Activated B cell treated with CpG ODN at 0.5 μM for 24 hours (primary cell): ENCODE measurements at regions of chr15 and their contacts with region 1.

Region 1: GRCh38 chr15:80989518-80990478 is at the start of gene MESD:
- DNase-seq: peak; percentile 90
- ATAC-seq: peak; percentile 99
- H3K4me3 Mint-ChIP-seq: peak within 1 kb of the TSS; percentile 99
- H3K27ac Mint-ChIP-seq: peak within 1 kb of the TSS; percentile 99
- H3K4me1 Mint-ChIP-seq: peaks cover 54% of the 10 kb centered on the region
- H3K27me3 Mint-ChIP-seq: no peaks in the 10 kb centered on the region
- CTCF ChIP-seq: no peak
- total RNA-seq, gene MESD: 21.4 and 23.8 TPM in 2 replicates

Region 2: GRCh38 chr15:80695104-80695910 is 294.5 kb before region 1 on chr15 and contains the start of gene ABHD17C:
- CTCF ChIA-PET with region 1: no interaction called
- POLR2A ChIA-PET with region 1: no interaction called
- intact Hi-C with region 1: loop called (anchors 10 kb)
- DNase-seq: peak; percentile 58
- ATAC-seq: peak; percentile 82
- H3K4me3 Mint-ChIP-seq: peak within 1 kb of the TSS; percentile 87
- H3K27ac Mint-ChIP-seq: peak within 1 kb of the TSS; percentile 69
- H3K4me1 Mint-ChIP-seq: peaks cover 16% of the 10 kb centered on the region
- H3K27me3 Mint-ChIP-seq: peaks cover 5% of the 10 kb centered on the region
- CTCF ChIP-seq: no peak
- total RNA-seq, gene ABHD17C: 2.4 and 2.5 TPM in 2 replicates

Region 3: DNA sequence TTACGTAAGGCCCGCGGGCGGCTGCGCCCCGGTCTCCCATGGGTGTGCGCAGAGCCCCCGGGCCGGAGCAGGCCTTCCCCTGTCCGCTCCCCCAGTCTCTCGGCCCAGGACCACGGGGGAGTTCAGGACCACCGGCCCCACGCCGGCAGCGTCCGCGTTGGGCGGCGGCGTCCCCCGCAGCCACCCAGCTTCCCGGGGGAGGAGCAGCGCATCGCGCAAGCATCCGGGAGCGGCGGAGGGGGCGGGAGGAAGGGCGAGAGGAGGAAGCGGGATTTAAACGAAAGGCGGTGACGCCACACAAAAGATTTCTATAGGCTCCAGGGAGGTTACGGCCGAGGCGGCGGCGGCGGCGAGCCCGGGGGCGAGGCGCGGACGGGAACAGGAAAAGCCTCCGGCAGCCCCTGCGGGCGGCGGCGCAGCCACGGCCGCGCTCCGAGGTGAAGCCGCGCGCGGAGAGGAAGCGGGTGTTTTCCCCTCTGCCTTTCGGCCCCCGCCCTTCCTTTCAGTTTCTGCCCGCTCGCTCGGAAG is 10.9 kb after region 1 on chr15 and contains the start of gene TLNRD1:
- CTCF ChIA-PET with region 1: no interaction called
- POLR2A ChIA-PET with region 1: interaction called, 83 read pairs
- intact Hi-C with region 1: loop called (anchors 1 kb)
- DNase-seq: peak; percentile 80
- ATAC-seq: peak; percentile 65
- H3K4me3 Mint-ChIP-seq: peak within 1 kb of the TSS; percentile 94
- H3K27ac Mint-ChIP-seq: peak within 1 kb of the TSS; percentile 96
- H3K4me1 Mint-ChIP-seq: peaks cover 47% of the 10 kb centered on the region
- H3K27me3 Mint-ChIP-seq: no peaks in the 10 kb centered on the region
- CTCF ChIP-seq: no peak
- total RNA-seq, gene TLNRD1: 25.7 TPM in 2 replicates

Region 4: DNA sequence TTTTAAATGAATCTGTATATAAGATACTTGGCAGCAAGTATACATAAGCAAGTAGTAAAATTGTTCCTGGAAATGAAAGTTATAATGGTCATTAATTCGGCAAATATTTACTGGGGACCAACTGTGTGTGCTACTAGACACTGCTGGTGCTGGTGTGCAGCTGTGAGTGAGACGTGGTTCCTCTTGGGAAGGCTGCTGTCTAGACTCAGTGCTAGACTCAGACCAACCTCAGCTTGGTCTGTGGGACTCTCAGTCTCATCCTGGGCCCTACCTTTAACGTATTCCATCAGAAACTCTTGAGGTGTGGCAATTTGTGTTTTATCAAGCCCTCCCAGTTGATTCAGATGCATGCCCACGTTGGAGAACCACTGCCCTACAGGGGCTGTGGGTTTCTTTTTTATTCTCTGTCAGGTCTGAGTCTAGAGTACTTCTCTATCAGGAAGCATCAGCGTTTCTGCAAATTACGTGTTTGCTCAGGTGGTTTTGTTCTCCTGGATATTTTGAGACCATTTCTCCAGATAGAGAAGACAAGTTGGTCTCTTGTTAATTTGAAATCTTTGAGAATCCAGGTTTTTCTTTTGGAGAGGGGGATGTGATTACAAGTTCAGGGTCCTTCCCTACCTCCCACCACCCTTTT is 17.7 kb after region 1 on chr15:
- CTCF ChIA-PET with region 1: no interaction called
- POLR2A ChIA-PET with region 1: interaction called, 10 read pairs
- intact Hi-C with region 1: no loop called
- DNase-seq: no peak
- ATAC-seq: no peak
- H3K4me3 Mint-ChIP-seq: no peak overlapping the region
- H3K27ac Mint-ChIP-seq: no peak overlapping the region
- H3K4me1 Mint-ChIP-seq: peaks cover 61% of the 10 kb centered on the region
- H3K27me3 Mint-ChIP-seq: no peaks in the 10 kb centered on the region
- CTCF ChIP-seq: no peak

Region 5: DNA sequence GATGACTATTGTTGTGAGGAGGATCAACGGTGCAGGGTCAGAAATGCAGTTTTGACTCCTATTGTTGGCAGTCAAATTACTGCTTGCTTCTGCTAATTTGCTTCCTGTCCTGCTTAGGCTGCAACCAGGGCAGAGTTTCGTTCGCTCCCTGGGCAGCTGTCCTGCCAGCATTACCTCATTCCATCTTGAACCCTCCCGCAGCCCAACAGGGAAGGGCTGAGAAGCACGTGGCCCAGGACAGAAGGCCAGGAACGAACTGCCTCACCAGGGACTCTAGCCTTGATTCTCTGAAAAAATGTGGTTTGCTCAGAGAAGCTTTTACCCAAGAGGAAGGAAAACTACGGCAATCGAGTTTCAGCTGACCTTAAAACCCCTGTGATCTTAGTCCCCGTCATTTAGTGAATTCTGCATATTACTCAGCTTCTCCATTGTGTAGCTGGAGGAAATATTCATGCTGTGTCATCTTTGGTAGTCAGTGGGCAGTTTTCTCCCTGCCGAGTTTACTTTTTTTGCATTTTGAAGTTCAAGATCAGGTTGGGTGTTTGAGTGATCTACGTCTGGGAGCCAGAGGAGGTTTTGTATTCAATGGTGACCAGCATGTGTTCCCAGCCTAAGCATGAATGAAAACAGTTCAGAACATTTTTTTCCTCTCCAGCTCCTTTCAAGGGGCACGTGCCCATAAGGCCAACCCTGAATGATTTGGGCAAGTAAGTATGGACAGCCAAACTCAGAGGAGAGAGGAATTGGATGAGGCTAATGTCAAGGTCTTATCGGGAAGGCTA is 33.9 kb after region 1 on chr15:
- CTCF ChIA-PET with region 1: no interaction called
- POLR2A ChIA-PET with region 1: interaction called, 3 read pairs
- intact Hi-C with region 1: loop called (anchors 1 kb)
- DNase-seq: peak; percentile 35
- ATAC-seq: peak; percentile 82
- H3K4me3 Mint-ChIP-seq: peak overlapping the region; percentile 78
- H3K27ac Mint-ChIP-seq: peak overlapping the region; percentile 91
- H3K4me1 Mint-ChIP-seq: peaks cover 18% of the 10 kb centered on the region
- H3K27me3 Mint-ChIP-seq: no peaks in the 10 kb centered on the region
- CTCF ChIP-seq: no peak

Region 6: GRCh38 chr15:82046666-82047452 is 1057.1 kb after region 1 on chr15:
- CTCF ChIA-PET with region 1: no interaction called
- POLR2A ChIA-PET with region 1: no interaction called
- intact Hi-C with region 1: loop called (anchors 2 kb)
- DNase-seq: peak; percentile 84
- ATAC-seq: peak; percentile 81
- H3K4me3 Mint-ChIP-seq: peak overlapping the region; percentile 89
- H3K27ac Mint-ChIP-seq: peak overlapping the region; percentile 66
- H3K4me1 Mint-ChIP-seq: peaks cover 16% of the 10 kb centered on the region
- H3K27me3 Mint-ChIP-seq: peaks cover 27% of the 10 kb centered on the region
- CTCF ChIP-seq: no peak